ENCODE measurements at regions of chr4 and their contacts with region 1.

Region 1: GRCh38 chr4:99405433-99406115 is 29.6 kb downstream of the ADH7 start:
- DNase-seq: peak; percentile 21 to 90
- H3K4me3 ChIP-seq: no peak overlapping the region
- H3K27ac ChIP-seq: no peak overlapping the region
- H3K4me1 ChIP-seq: peaks cover 0 to 4% (median 1%) of the 10 kb centered on the region in 4 experiments; a peak in 4 of 7 replicates
- H3K27me3 ChIP-seq: no peaks in the 10 kb centered on the region
- CTCF ChIP-seq: peak in 2 of 3 experiments; percentile 80 to 84; a peak in 3 of 4 replicates
- EP300 ChIP-seq: no peak
- POLR2A ChIP-seq: no peak
- RAD21 ChIP-seq: peak; percentile 93 to 94

Region 2: DNA sequence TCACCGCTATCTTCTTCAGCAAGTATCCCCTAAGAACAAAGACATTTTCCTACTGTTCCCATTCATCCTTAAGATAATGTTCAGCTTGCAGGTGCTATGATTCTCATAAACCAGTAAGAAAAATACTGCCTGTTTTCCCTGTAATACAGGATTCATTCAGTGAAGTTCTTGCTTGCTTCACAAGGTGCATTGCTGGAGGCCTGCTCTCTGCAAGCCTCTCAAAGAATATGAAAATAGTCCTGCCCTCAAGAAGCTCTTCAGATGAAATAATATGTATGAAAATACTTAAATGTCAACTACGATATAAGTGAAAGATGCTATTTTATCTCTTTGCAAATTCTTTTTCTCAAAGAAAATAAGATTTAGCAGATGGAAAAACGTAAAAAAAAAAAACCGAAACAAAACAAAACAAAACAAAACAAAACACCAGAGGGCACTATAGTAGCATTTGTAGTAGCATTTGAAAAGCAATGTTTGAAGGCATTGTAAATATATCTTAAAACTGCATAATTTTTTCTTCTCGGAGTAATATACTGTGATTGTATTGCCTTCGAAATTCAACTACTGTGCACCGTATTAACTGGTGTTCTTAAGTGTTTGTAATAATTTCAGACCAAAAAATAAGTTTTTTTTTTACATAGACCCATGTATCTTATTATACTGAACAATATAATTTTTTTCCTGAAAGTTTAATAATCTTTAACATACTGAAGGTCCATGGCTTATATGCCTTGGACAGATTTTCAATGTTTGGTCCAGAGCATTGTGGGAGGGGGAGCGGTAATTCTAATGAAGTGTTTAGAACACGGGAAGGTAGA is 287.5 kb before region 1 on chr4:
- CTCF ChIA-PET with region 1: interaction called, 14 read pairs
- POLR2A ChIA-PET with region 1: no interaction called
- DNase-seq: no peak
- H3K4me3 ChIP-seq: no peak overlapping the region
- H3K27ac ChIP-seq: no peak overlapping the region
- H3K4me1 ChIP-seq: no peaks in the 10 kb centered on the region; a peak in 1 of 7 replicates
- H3K27me3 ChIP-seq: no peaks in the 10 kb centered on the region
- CTCF ChIP-seq: no peak
- EP300 ChIP-seq: no peak
- POLR2A ChIP-seq: no peak
- RAD21 ChIP-seq: peak in 1 of 2 experiments; percentile 40; a peak in 3 of 4 replicates

Region 3: GRCh38 chr4:99324979-99325378 is 80.6 kb before region 1 on chr4:
- CTCF ChIA-PET with region 1: no interaction called
- POLR2A ChIA-PET with region 1: no interaction called
- DNase-seq: no peak
- H3K4me3 ChIP-seq: no peak overlapping the region
- H3K27ac ChIP-seq: no peak overlapping the region
- H3K4me1 ChIP-seq: peaks cover 0 to 3% (median 3%) of the 10 kb centered on the region in 4 experiments; a peak in 2 of 7 replicates
- H3K27me3 ChIP-seq: no peaks in the 10 kb centered on the region
- CTCF ChIP-seq: no peak
- EP300 ChIP-seq: no peak
- POLR2A ChIP-seq: no peak
- RAD21 ChIP-seq: no peak

Region 4: GRCh38 chr4:99383833-99384392 is 21.7 kb before region 1 on chr4:
- CTCF ChIA-PET with region 1: interaction called, 25 read pairs
- POLR2A ChIA-PET with region 1: no interaction called
- DNase-seq: no peak
- H3K4me3 ChIP-seq: no peak overlapping the region
- H3K27ac ChIP-seq: no peak overlapping the region
- H3K4me1 ChIP-seq: no peaks in the 10 kb centered on the region
- H3K27me3 ChIP-seq: no peaks in the 10 kb centered on the region
- CTCF ChIP-seq: no peak
- EP300 ChIP-seq: no peak
- POLR2A ChIP-seq: no peak
- RAD21 ChIP-seq: no peak

Region 5: DNA sequence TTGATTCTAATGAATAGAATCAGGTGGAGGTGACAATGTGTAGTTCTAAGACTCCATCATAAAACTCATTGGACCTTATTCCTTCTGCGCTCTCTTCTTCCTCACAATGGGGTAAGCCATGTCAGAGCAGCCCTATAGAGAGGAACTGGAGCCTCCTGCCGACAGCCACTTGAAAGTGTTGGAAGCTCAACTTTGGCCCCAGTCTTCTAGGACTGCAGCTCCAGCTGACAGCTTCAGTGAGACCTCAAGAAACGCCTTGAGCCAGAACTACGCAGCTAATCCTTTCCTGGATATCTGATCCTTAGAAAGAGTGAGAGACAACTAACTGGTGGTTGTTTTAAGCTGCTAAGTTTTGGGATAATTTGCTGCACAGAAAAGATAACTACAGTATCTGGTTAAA is 51.7 kb after region 1 on chr4:
- CTCF ChIA-PET with region 1: interaction called, 99 read pairs
- POLR2A ChIA-PET with region 1: no interaction called
- DNase-seq: no peak
- H3K4me3 ChIP-seq: no peak overlapping the region
- H3K27ac ChIP-seq: no peak overlapping the region
- H3K4me1 ChIP-seq: no peaks in the 10 kb centered on the region; a peak in 1 of 7 replicates
- H3K27me3 ChIP-seq: no peaks in the 10 kb centered on the region
- CTCF ChIP-seq: no peak
- EP300 ChIP-seq: no peak
- POLR2A ChIP-seq: no peak
- RAD21 ChIP-seq: 0 out of 4 replicates have a peak, but pooled peaks of 1 of the 2 experiments have one; percentile 19

Region 6: GRCh38 chr4:99462875-99463464 is 57.4 kb after region 1 on chr4:
- CTCF ChIA-PET with region 1: interaction called, 99 read pairs
- POLR2A ChIA-PET with region 1: no interaction called
- DNase-seq: no peak
- H3K4me3 ChIP-seq: no peak overlapping the region
- H3K27ac ChIP-seq: no peak overlapping the region
- H3K4me1 ChIP-seq: no peaks in the 10 kb centered on the region; a peak in 1 of 7 replicates
- H3K27me3 ChIP-seq: no peaks in the 10 kb centered on the region
- CTCF ChIP-seq: peak; percentile 50 to 86 (median 82)
- EP300 ChIP-seq: no peak
- POLR2A ChIP-seq: no peak
- RAD21 ChIP-seq: peak; percentile 98 to 99

Region 7: GRCh38 chr4:99585516-99585915 is 179.9 kb after region 1 on chr4:
- CTCF ChIA-PET with region 1: no interaction called
- POLR2A ChIA-PET with region 1: no interaction called
- DNase-seq: no peak
- H3K4me3 ChIP-seq: no peak overlapping the region
- H3K27ac ChIP-seq: no peak overlapping the region
- H3K4me1 ChIP-seq: no peaks in the 10 kb centered on the region
- H3K27me3 ChIP-seq: no peaks in the 10 kb centered on the region
- CTCF ChIP-seq: no peak
- EP300 ChIP-seq: no peak
- POLR2A ChIP-seq: no peak
- RAD21 ChIP-seq: no peak

Region 8: GRCh38 chr4:99642725-99643489 is 237.3 kb after region 1 on chr4:
- CTCF ChIA-PET with region 1: no interaction called
- POLR2A ChIA-PET with region 1: no interaction called
- DNase-seq: no peak
- H3K4me3 ChIP-seq: no peak overlapping the region
- H3K27ac ChIP-seq: no peak overlapping the region
- H3K4me1 ChIP-seq: peaks cover 0 to 10% (median 6%) of the 10 kb centered on the region in 4 experiments; a peak in 2 of 7 replicates
- H3K27me3 ChIP-seq: peaks cover 4 to 20% (median 6%) of the 10 kb centered on the region in 4 experiments; a peak in 5 of 7 replicates
- CTCF ChIP-seq: no peak
- EP300 ChIP-seq: no peak
- POLR2A ChIP-seq: no peak
- RAD21 ChIP-seq: no peak